Heart right ventricle (tissue), 16 donors: ENCODE measurements at regions of chr22 and their contacts with region 1.

Region 1: DNA sequence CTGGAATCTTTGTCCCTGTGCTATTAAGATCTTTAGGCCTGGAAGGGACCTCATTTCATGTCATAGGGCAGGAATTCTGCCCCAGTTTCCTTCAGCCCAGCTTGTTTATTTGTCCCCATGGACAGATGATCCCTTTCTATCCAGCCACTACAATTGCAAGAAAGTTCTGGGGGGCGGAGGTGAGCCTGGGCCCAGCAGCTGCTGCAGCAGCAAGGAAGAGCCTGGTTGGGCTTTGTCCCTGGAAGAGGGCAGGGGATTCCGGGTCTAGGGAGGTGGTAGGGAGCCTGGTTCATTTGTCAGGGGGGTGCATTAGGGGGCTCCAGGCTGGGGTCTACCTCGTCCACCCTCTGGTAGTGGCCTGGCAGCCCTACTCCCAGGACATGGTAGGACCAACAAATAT is 16.4 kb upstream of the CACNA1I start:
- DNase-seq: no peak
- ATAC-seq: no peak
- H3K4me3 ChIP-seq: no peak overlapping the region
- H3K27ac ChIP-seq: no peak overlapping the region
- H3K4me1 ChIP-seq: peaks cover 0 to 8% (median 3%) of the 10 kb centered on the region in 9 donors
- H3K27me3 ChIP-seq: peaks cover 12 to 90% (median 74%) of the 10 kb centered on the region in 7 donors
- CTCF ChIP-seq: no peak

Region 2: DNA sequence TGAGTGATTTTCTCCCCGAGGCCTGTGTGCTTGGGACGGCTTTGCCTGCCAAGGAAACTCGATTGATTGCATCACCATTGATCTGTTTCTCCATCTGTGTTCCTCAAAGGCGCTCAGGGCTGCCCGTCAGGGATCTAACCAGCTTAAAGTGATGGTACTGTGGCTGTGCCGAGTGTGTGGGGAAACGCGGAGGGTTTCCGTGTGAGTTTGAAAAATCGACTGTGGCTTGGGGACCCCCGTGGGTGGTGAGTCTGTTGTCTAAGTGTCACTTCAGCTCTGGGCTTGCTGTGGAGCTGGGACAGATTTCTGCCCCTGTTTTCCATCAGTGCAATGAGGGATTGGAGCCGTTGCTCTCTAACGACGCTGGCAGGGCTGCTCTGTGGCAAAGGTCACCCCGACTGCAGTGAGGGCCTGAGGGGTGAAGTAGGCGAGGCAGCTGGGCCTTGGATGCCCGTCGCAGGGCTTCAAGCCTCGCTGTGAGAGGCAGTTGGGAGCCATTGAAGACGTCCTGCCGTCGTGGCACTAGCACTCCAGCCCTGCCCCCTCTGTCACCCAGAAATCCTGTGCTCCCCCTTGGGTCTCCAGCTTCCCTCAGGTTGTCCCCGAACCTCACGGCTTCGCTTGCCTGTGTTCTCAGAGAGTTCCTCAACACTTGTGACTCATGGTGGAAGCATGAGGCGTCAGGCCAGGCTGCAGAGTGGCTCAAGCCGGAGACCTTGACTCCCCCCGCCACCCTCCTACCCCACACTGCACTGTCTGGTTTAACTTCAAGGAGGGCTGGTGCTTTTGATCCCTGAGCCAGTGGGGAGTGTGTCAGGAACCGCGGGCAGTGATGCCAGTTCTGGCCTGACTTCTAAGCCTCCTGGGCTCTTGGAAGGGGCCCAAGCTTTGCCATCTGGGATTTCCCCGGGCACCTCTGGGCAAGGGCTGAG is 38.2 kb after region 1 on chr22:
- intact Hi-C with region 1: no loop called
- DNase-seq: no peak
- ATAC-seq: peak in 6 of 8 donors; percentile 14 to 59 (median 39)
- H3K4me3 ChIP-seq: no peak overlapping the region
- H3K27ac ChIP-seq: no peak overlapping the region
- H3K4me1 ChIP-seq: peaks cover 0 to 10% (median 0%) of the 10 kb centered on the region in 9 donors
- H3K27me3 ChIP-seq: peaks cover 0 to 62% (median 27%) of the 10 kb centered on the region in 7 donors
- CTCF ChIP-seq: no peak

Region 3: DNA sequence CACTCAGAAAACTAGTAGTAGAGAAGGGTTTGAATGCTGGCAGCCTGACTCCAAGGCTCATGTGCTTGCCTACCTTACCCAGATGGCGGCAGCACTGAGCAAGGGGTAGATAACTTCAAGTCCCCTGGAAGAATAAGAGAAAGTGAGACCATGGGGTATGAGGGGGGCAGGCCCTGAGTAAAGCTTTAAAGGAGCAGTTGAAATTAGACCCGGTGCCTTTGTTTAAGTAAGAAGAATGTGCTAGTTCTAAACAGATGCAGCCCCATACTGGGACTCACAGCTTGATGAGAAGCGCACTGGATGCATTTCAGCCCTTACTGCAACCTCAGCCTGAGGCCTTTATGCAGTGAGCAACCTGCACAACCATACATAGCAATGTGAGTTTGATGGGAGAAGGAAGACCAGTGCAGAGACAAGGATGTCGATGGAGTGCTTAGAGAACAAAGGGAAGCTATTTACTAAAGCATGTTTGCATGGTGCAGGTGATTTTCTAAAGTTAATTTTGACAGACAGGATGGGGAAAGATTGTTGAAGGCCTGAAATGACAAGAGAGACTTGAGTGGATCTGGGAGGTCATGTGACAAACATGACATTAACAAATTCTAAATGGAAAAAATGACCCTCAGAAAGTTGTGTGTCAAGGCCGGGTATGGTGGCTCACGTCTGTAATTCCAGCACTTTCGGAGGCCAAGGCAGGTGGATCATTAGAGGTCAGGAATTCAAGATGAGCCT is 378.9 kb after region 1 on chr22:
- intact Hi-C with region 1: loop called in 1 of 10 experiments (anchors 5 kb)
- DNase-seq: no peak
- ATAC-seq: no peak
- H3K4me3 ChIP-seq: no peak overlapping the region
- H3K27ac ChIP-seq: no peak overlapping the region
- H3K4me1 ChIP-seq: peaks cover 0 to 32% (median 0%) of the 10 kb centered on the region in 9 donors
- H3K27me3 ChIP-seq: peaks cover 0 to 77% (median 46%) of the 10 kb centered on the region in 7 donors
- CTCF ChIP-seq: peak in 7 of 9 donors; percentile 47 to 69 (median 55)